Naive thymus-derived CD8-positive, alpha-beta T cell (primary cell): ENCODE measurements at regions of chr7 and their contacts with region 1.

Region 1: DNA sequence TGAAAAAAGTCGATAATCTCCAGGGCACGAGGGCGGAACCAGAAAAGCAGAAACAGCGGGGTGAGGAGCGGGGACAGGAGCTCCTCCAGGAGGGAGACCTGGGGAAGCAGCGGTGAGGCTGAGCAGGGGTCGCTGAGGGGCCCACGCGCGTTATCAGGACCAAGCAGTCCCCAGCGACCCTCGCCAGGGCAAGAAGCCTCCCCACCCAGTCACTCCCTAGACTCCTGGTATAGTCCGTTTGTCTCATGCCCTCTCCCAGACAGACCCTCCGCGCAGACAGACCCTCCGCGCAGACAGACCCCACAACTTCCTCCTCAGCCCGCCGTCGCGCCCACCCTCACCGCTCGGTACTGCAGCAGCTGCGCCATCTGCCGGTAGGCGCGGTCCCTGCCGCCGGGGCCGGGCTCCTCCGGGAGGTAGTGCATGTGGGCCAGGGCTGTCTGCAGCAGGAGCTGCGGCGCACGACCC is 6.3 kb downstream of the ATG9B start:
- DNase-seq: peak; percentile 72 to 91 (median 82)
- ATAC-seq: peak; percentile 53 to 56
- H3K4me3 Mint-ChIP-seq: peak overlapping the region; percentile 75 to 97 (median 88)
- H3K27ac Mint-ChIP-seq: peak overlapping the region; percentile 64 to 99 (median 95)
- H3K4me1 Mint-ChIP-seq: peaks cover 38 to 63% (median 57%) of the 10 kb centered on the region in 4 donors
- H3K27me3 Mint-ChIP-seq: peaks cover 0 to 9% (median 0%) of the 10 kb centered on the region in 5 donors

Region 2: GRCh38 chr7:150830937-150831336 is 187.1 kb before region 1 on chr7:
- POLR2A ChIA-PET with region 1: no interaction called
- DNase-seq: no peak
- ATAC-seq: no peak
- H3K4me3 Mint-ChIP-seq: no peak overlapping the region
- H3K27ac Mint-ChIP-seq: peak overlapping the region in 1 of 10 donors; percentile 35
- H3K4me1 Mint-ChIP-seq: no peaks in the 10 kb centered on the region
- H3K27me3 Mint-ChIP-seq: peaks cover 21 to 55% (median 36%) of the 10 kb centered on the region in 5 donors

Region 3: DNA sequence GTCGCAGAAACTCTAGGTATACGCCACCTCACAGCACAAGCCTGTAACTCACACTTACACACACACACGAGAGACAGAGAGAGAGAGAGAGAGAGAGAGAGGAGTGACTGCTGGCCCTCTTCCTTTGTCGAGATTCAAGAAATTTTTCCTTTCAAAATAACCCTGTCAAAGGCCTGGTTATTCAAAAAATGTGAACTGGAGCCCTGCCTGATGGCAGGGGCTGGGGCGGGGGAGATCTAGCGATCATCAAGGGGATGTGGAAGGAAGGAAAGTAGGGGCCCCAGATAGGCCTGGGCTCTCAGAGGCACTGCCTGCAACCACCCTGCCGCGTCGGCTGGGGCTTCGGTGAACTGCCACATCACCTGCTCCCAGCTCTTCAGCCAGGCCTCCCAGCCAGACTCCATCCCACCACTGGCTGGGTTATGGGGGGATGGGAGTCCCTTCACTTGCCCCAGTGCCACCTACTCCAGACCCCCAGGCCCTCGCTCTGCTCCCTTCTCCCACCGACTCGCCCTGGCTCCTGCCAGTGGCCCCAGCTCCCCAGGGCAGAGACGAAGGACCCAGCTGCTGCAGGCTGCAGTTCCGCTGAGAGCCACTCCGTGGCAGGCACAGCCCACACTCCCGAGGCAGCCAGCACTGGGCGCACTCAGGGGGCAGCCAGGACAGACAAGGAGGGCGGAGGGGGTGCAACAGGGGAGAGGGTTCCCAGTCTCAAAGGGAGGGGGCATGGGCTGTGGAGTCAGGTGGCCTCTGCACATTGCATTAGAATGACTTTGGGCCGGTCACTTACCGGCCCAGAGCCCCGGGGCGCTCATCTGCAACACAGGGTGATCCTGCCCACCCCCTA is 55.2 kb before region 1 on chr7:
- POLR2A ChIA-PET with region 1: interaction called, 12 read pairs
- DNase-seq: peak; percentile 38 to 83 (median 62)
- ATAC-seq: peak; percentile 93 to 98
- H3K4me3 Mint-ChIP-seq: no peak overlapping the region
- H3K27ac Mint-ChIP-seq: peak overlapping the region in 2 of 10 donors; percentile 7 to 13
- H3K4me1 Mint-ChIP-seq: peaks cover 8 to 25% (median 12%) of the 10 kb centered on the region in 4 donors
- H3K27me3 Mint-ChIP-seq: peaks cover 11 to 44% (median 25%) of the 10 kb centered on the region in 5 donors

Region 4: DNA sequence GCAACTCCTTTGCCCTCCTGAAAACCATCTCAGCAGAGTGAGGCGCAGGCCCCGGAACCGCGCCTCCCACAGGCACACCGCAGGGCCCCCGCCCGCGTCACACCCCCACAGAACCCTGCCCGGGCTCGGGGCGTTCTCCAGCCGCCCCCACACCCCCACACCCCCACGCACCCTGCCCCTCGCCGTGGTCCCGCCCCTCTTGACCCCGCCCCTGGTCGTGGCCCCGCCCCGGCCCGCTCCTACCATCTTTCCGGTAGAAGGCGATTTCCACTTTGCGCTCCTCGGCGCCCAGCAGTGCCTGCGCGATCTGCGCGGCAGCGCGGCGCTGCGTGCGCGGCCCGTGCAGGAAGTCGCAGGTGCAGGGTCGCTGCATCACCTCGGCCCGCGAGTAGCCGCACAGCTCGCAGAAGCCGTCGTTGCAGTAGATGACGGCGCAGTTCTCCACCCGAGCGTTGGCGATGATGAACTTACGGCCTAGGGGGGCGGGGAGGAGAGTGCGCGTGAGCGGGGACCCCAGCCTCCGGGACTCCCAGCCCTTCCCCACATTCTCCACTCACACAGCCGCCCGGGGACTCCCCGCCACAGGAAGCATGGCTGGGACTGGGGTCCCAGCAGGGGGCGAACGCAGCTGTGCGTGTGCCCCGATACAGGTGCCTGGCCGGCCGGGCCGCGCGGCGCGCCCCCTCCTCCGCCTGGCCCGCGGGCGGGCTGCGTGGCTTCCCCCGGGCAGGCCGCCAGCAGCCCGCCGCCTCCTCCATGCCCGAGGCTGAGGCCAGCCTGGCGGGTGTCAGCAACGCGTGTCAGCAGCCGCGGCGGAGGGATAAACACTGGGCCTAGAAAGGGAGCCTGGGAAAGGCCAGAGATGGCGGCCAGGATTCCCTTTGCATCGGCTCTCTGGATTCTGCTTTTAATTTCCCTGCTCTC is 43.3 kb before region 1 on chr7:
- POLR2A ChIA-PET with region 1: interaction called, 24 read pairs
- DNase-seq: peak; percentile 69 to 90 (median 80)
- ATAC-seq: peak; percentile 75 to 80
- H3K4me3 Mint-ChIP-seq: peak overlapping the region; percentile 80 to 92 (median 87)
- H3K27ac Mint-ChIP-seq: peak overlapping the region; percentile 70 to 98 (median 94)
- H3K4me1 Mint-ChIP-seq: peaks cover 30 to 71% (median 50%) of the 10 kb centered on the region in 4 donors
- H3K27me3 Mint-ChIP-seq: peaks cover 3 to 27% (median 15%) of the 10 kb centered on the region in 5 donors

Region 5: GRCh38 chr7:150992833-150993302 is 25.1 kb before region 1 on chr7:
- POLR2A ChIA-PET with region 1: interaction called, 11 read pairs
- DNase-seq: no peak
- ATAC-seq: peak in 1 of 2 donors; percentile 41
- H3K4me3 Mint-ChIP-seq: no peak overlapping the region
- H3K27ac Mint-ChIP-seq: peak overlapping the region in 5 of 10 donors; percentile 3 to 60 (median 46)
- H3K4me1 Mint-ChIP-seq: peaks cover 18 to 53% (median 40%) of the 10 kb centered on the region in 4 donors
- H3K27me3 Mint-ChIP-seq: peaks cover 0 to 11% (median 0%) of the 10 kb centered on the region in 5 donors

Region 6: DNA sequence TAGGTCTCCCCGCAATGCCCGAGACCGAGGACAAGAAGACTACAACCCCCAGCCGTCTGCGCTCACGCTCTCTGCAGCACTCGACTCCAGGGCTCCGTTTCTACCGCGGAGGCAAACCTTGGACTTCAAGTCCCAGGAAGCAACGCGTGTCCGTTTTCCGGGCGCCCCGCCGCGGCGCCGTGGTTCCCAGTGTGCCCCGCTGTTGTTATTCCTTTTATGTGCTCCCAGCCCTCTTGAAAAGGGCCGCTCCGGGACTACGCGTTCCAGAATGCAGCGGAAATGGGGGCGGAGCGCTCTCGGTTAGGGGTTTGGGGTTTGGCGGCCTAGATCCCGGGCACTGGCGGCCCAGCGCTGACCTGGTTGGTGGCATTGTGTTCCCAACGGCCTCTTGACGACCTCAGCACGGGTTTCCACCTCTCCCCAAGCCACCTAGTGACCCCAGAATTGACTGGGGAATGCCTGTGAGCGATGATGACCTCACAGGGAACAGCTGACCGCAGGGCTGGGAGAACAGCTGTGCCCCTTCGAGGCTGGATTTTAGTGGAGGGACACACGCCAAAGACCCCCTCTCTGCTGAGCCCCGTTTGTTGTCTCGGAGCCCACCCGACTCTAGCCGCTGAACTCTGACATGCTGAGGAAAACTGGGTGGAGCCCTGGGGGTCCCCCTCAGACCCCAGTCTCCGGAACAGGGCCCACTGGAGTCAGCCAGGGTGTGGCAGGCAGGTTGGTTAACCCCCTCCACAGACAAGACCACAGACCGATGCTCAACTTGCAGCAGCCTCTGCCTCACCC is 40.2 kb after region 1 on chr7:
- POLR2A ChIA-PET with region 1: interaction called, 27 read pairs
- DNase-seq: peak; percentile 91 to 99 (median 98)
- ATAC-seq: peak; percentile 91
- H3K4me3 Mint-ChIP-seq: peak overlapping the region; percentile 88 to 97 (median 94)
- H3K27ac Mint-ChIP-seq: peak overlapping the region; percentile 85 to 98 (median 96)
- H3K4me1 Mint-ChIP-seq: peaks cover 18 to 51% (median 44%) of the 10 kb centered on the region in 4 donors
- H3K27me3 Mint-ChIP-seq: peaks cover 0 to 1% (median 0%) of the 10 kb centered on the region in 5 donors